ENCODE measurements at regions of chr22 and their contacts with region 1.

Region 1: GRCh38 chr22:30953206-30953605 is 15.4 kb downstream of the MORC2 start:
- DNase-seq: no peak
- ATAC-seq: no peak
- H3K4me3 Mint-ChIP-seq: peak overlapping the region in 1 of 10 donors; percentile 11
- H3K27ac Mint-ChIP-seq: peak overlapping the region in 7 of 10 donors; percentile 3 to 78 (median 61)
- H3K4me1 Mint-ChIP-seq: peaks cover 44 to 75% (median 67%) of the 10 kb centered on the region in 4 donors
- H3K27me3 Mint-ChIP-seq: no peaks in the 10 kb centered on the region

Region 2: GRCh38 chr22:30927806-30928205 is 25.4 kb before region 1 on chr22:
- POLR2A ChIA-PET with region 1: no interaction called
- DNase-seq: no peak
- ATAC-seq: no peak
- H3K4me3 Mint-ChIP-seq: no peak overlapping the region
- H3K27ac Mint-ChIP-seq: no peak overlapping the region
- H3K4me1 Mint-ChIP-seq: peaks cover 9 to 26% (median 17%) of the 10 kb centered on the region in 4 donors
- H3K27me3 Mint-ChIP-seq: no peaks in the 10 kb centered on the region

Region 3: GRCh38 chr22:30940685-30941362 is 12.4 kb before region 1 on chr22:
- POLR2A ChIA-PET with region 1: interaction called, 13 read pairs
- DNase-seq: peak; percentile 16 to 77 (median 46)
- ATAC-seq: peak; percentile 73 to 79
- H3K4me3 Mint-ChIP-seq: peak overlapping the region; percentile 81 to 92 (median 86)
- H3K27ac Mint-ChIP-seq: peak overlapping the region; percentile 93 to 98 (median 96)
- H3K4me1 Mint-ChIP-seq: peaks cover 38 to 92% (median 87%) of the 10 kb centered on the region in 4 donors
- H3K27me3 Mint-ChIP-seq: no peaks in the 10 kb centered on the region

Region 4: DNA sequence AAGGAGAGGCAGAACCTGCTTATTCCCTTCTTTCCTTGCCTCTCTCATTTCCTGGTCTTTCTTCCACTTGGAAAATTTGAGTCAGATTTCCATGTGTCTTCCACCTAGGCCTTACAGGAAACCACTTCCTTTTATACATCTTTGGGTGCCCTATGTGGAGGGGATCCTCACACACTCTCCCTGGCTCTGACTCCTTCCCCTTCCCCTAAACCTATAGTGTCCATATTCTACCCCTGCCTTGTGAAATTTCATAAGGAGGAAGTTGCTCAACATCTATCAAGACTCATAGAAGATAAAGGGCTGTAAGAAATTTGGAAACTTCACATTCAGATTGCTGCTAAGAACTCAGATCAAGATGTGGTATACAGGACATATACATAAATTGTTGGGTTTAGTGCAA is 36.3 kb after region 1 on chr22:
- POLR2A ChIA-PET with region 1: no interaction called
- DNase-seq: no peak
- ATAC-seq: no peak
- H3K4me3 Mint-ChIP-seq: no peak overlapping the region
- H3K27ac Mint-ChIP-seq: no peak overlapping the region
- H3K4me1 Mint-ChIP-seq: peaks cover 0 to 3% (median 0%) of the 10 kb centered on the region in 4 donors
- H3K27me3 Mint-ChIP-seq: peaks cover 0 to 1% (median 0%) of the 10 kb centered on the region in 5 donors

Region 5: GRCh38 chr22:31005535-31005934 is 52.3 kb after region 1 on chr22:
- POLR2A ChIA-PET with region 1: no interaction called
- DNase-seq: no peak
- ATAC-seq: no peak
- H3K4me3 Mint-ChIP-seq: no peak overlapping the region
- H3K27ac Mint-ChIP-seq: no peak overlapping the region
- H3K4me1 Mint-ChIP-seq: peaks cover 0 to 2% (median 0%) of the 10 kb centered on the region in 4 donors
- H3K27me3 Mint-ChIP-seq: peaks cover 0 to 8% (median 7%) of the 10 kb centered on the region in 5 donors

Region 6: GRCh38 chr22:31313366-31314147 is 360.4 kb after region 1 on chr22:
- POLR2A ChIA-PET with region 1: no interaction called
- DNase-seq: peak; percentile 36 to 79 (median 64)
- ATAC-seq: peak; percentile 71 to 78
- H3K4me3 Mint-ChIP-seq: peak overlapping the region in 2 of 10 donors; percentile 1 to 3
- H3K27ac Mint-ChIP-seq: peak overlapping the region; percentile 15 to 92 (median 64)
- H3K4me1 Mint-ChIP-seq: peaks cover 7 to 29% (median 17%) of the 10 kb centered on the region in 4 donors
- H3K27me3 Mint-ChIP-seq: no peaks in the 10 kb centered on the region